Cardiac septum (tissue), 1 donor: ENCODE measurements at regions of chr13 and their contacts with region 1.

Region 1: GRCh38 chr13:45132369-45133064 is 12.2 kb downstream of the GTF2F2 start:
- DNase-seq: no peak

Region 2: DNA sequence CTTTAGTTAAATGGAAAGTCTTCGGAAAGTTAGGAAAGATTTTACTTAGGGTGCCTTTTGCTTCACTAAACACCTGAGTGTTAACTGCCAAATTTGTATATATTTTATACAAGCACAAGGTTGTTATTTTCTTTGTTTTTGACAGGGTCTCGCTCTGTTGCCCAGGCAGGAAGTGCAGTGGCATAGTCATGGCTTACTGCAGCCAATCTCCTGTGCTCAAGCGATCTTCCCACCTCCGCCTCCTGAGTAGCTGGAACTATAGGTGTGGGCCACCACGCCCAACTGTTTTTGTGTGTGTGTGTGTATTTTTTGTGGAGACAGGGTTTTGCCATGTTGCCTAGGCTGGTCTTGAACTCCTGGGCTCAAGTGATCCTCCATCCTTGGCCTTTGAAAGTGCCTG is 52.2 kb after region 1 on chr13:
- intact Hi-C with region 1: no loop called
- DNase-seq: no peak

Region 3: DNA sequence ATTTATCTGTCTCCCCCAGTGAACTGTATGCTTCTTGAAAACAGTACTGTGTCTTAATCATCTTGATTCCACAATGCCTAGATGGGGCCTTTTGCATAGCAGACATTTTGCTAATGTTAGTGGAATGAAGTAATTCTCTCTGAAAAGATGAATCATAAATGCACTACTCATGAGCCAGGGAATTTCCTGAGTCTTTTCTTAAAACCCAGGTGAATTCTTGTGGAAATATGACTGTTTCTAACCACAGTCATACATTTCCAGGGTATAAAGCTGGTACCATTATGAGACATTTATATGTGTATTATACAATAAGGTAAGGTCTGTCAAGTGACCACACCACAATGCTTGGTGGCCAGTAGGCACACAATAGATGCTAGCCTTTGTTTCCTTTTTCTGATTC is 73.8 kb after region 1 on chr13:
- intact Hi-C with region 1: loop called (anchors 10 kb)
- DNase-seq: no peak